Activated CD4-positive, alpha-beta T cell treated with anti-CD3 and anti-CD28 coated beads, Interleukin-2, amount 10 ng/mL, durations not matched to agents 7 days and 5 days (primary cell): ENCODE measurements at regions of chr1 and their contacts with region 1.

Region 1: GRCh38 chr1:193042766-193043691 is 16.1 kb downstream of the UCHL5 start:
- DNase-seq: no peak
- H3K4me3 Mint-ChIP-seq: no peak overlapping the region
- H3K27ac Mint-ChIP-seq: no peak overlapping the region
- H3K4me1 Mint-ChIP-seq: peaks cover 6% of the 10 kb centered on the region
- H3K27me3 Mint-ChIP-seq: no peaks in the 10 kb centered on the region

Region 2: GRCh38 chr1:193013005-193013404 is 30.0 kb before region 1 on chr1:
- CTCF ChIA-PET with region 1: no interaction called
- POLR2A ChIA-PET with region 1: no interaction called
- DNase-seq: no peak
- H3K4me3 Mint-ChIP-seq: no peak overlapping the region
- H3K27ac Mint-ChIP-seq: no peak overlapping the region
- H3K4me1 Mint-ChIP-seq: no peaks in the 10 kb centered on the region
- H3K27me3 Mint-ChIP-seq: no peaks in the 10 kb centered on the region

Region 3: DNA sequence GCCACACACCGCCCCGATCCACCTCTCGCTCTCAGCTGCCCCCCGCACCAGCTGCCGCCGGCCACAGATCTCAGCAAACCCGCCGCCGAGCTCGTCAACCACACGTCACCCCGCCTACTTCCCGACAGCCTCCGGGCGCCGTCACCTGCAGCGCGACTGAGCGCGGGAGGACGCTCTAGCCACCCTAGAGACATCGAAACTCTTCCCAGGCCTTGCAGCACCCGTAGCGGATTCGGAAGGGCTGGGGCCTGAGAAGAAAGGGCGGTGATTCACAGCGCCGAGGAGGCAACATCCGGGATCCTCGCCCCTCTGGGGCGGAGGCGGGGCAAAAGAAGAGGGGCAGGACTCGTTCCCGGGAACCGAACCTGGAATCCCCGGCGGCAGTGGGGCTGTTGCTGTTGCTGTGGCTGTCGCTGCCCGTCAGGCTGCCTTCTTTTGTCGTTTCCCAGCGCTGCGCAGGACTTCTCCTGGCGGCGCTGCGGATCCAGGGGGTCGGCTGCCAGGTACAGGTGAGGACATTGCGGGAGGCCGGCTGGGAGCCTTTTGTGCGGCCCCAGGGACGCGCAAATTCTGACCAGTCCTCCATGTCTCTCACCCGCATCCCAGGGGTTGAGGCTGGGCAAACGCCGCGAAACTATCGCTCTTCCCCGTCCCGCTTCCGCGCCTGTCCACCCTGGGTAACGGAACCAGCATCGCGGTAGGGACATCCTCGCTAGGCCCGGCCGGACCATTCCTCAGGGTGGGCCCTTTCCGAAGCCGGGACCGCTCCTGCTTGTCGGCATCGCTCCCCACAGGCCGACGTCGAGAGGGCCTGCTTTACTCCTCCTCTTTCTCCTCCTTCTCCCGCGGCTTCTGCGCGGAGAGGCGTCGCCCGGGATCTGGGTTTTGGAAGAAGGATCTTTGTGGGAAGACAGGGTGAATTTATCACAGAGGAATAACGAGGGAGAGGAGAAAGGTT is 16.5 kb after region 1 on chr1 and contains the starts of genes RO60 and UCHL5:
- CTCF ChIA-PET with region 1: interaction called, 10 read pairs
- POLR2A ChIA-PET with region 1: no interaction called
- DNase-seq: peak; percentile 96
- H3K4me3 Mint-ChIP-seq: peak within 1 kb of the TSS; percentile 100
- H3K27ac Mint-ChIP-seq: peak within 1 kb of the TSS; percentile 100
- H3K4me1 Mint-ChIP-seq: peaks cover 52% of the 10 kb centered on the region
- H3K27me3 Mint-ChIP-seq: no peaks in the 10 kb centered on the region
- total RNA-seq, gene RO60: 51.5 to 60.2 TPM
- total RNA-seq, gene UCHL5: 47.7 to 58.9 TPM